BJ (cell line): ENCODE measurements at regions of chr20 and their contacts with region 1.

Region 1: DNA sequence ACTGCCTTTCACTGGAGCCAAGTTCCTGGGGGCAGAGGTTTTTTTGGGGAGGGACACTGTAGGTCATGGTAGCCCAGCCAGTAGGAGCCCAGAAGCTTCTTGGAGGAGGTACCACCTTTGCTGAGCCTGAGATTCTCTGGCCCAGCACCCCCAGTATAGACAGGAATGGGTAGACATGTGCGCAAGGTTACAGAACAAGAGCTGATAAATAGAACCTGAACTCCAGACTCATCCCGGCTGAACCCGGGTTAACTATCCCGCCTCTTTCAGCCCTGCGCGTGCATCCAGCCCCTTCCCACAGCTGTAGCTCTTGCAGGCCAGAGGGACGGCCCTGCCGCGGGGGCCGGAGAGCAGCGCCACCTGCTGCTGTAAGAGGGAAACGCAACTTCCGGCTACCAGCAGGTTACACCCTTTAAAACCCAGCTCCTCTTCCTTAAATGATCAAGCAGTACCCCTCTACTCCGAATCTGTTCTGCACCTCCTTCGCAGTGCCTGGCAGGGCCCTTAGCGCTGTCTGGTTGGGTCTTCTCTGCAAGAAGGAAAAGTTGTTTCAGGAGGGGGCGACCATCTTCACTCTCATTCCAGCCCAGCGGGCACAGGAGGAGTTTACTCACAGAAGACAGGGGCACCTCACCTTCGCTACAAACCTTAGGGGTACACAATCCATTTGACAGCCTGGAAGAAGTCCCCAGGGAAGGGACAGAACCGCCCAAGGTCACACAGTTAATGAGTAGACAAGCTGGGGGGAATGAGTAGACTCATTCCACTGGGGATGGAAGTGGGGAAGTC is 7.5 kb downstream of the SRXN1 start:
- DNase-seq: no peak
- H3K4me3 ChIP-seq: no peak overlapping the region
- H3K27me3 ChIP-seq: no peaks in the 10 kb centered on the region
- CTCF ChIP-seq: peak; percentile 96

Region 2: GRCh38 chr20:235891-236290 is 409.6 kb before region 1 on chr20:
- CTCF ChIA-PET with region 1: no interaction called
- POLR2A ChIA-PET with region 1: no interaction called
- DNase-seq: no peak
- H3K4me3 ChIP-seq: no peak overlapping the region
- H3K27me3 ChIP-seq: no peaks in the 10 kb centered on the region; the same call in 1 of the 2 replicates
- CTCF ChIP-seq: 0 out of 2 replicates have a peak, but pooled peaks have one; percentile 13

Region 3: DNA sequence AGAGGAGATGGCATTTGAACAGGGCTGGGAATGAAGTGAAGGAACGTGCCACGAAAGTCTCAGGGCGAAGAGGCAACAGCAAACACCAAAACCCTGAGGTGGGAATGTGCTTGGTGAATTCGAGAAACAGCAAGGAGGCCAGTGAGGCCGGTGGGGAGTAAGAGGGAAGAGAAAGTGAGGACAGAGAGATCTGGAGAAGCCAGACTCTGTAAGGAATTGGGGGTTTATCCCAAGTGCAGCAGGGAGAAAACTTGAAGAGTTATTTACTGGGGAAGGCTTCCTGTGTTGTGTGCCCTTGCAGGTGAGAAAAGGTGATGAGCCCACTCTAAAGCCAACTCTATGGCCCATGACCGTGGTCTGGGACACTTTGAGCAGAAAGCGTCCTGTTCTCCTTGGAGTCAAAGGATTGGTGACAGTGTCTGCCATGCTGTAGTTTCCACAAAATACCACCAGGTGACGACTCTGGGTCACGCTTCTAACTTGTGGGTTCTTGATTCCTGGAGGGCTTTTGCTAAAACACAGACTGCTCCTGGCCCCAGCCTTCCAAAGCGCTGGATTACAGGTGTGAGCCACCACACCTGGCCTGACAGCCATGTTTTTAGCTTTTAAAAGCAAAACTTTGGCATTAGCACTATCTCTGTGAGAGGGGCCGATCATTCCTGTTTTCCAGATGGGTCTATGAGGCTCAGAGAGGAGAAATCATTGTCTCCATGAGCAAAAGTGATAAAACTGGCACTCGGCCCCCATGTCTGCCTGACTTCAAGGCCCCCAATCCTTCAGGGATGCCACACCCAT is 83.9 kb before region 1 on chr20:
- CTCF ChIA-PET with region 1: interaction called, 68 read pairs
- POLR2A ChIA-PET with region 1: no interaction called
- DNase-seq: no peak
- H3K4me3 ChIP-seq: no peak overlapping the region
- H3K27me3 ChIP-seq: peaks cover 6% of the 10 kb centered on the region; the same call in 1 of the 2 replicates
- CTCF ChIP-seq: peak; percentile 97

Region 4: GRCh38 chr20:631101-631500 is 14.4 kb before region 1 on chr20:
- CTCF ChIA-PET with region 1: interaction called, 13 read pairs
- POLR2A ChIA-PET with region 1: no interaction called
- DNase-seq: no peak
- H3K4me3 ChIP-seq: no peak overlapping the region
- H3K27me3 ChIP-seq: peaks cover 16% of the 10 kb centered on the region
- CTCF ChIP-seq: no peak